ENCODE measurements at regions of chr9 and their contacts with region 1.

Region 1: GRCh38 chr9:112112941-112113681 is 62.0 kb downstream of the SUSD1 start:
- ATAC-seq: peak; percentile 48 to 91 (median 60)
- H3K4me3 ChIP-seq: no peak overlapping the region
- H3K27ac ChIP-seq: no peak overlapping the region
- H3K4me1 ChIP-seq: no peaks in the 10 kb centered on the region

Region 2: GRCh38 chr9:112224401-112225289 is 111.5 kb after region 1 on chr9:
- in situ Hi-C with region 1: loop called in 1 of 9 experiments (anchors 25 kb)
- ATAC-seq: peak in 2 of 8 experiments; percentile 21 to 52
- H3K4me3 ChIP-seq: no peak overlapping the region
- H3K27ac ChIP-seq: no peak overlapping the region
- H3K4me1 ChIP-seq: peaks cover 9 to 10% of the 10 kb centered on the region in 2 donors

Region 3: GRCh38 chr9:112355427-112355897 is 242.4 kb after region 1 on chr9:
- in situ Hi-C with region 1: loop called in 1 of 9 experiments (anchors 10 kb)
- ATAC-seq: no peak
- H3K4me3 ChIP-seq: no peak overlapping the region
- H3K27ac ChIP-seq: no peak overlapping the region
- H3K4me1 ChIP-seq: no peaks in the 10 kb centered on the region